ENCODE measurements at regions of chr17 and their contacts with region 1.

Region 1: GRCh38 chr17:40019140-40019991 is 4.1 kb downstream of the CSF3 start:
- DNase-seq: no peak
- ATAC-seq: peak in 1 of 4 donors; percentile 53
- H3K4me3 ChIP-seq: no peak overlapping the region
- H3K27ac ChIP-seq: peak overlapping the region in 5 of 12 donors; percentile 13 to 67 (median 33)
- H3K4me1 ChIP-seq: peaks cover 0 to 70% (median 30%) of the 10 kb centered on the region in 12 donors
- H3K27me3 ChIP-seq: no peaks in the 10 kb centered on the region
- CTCF ChIP-seq: no peak
- POLR2A ChIP-seq: no peak

Region 2: DNA sequence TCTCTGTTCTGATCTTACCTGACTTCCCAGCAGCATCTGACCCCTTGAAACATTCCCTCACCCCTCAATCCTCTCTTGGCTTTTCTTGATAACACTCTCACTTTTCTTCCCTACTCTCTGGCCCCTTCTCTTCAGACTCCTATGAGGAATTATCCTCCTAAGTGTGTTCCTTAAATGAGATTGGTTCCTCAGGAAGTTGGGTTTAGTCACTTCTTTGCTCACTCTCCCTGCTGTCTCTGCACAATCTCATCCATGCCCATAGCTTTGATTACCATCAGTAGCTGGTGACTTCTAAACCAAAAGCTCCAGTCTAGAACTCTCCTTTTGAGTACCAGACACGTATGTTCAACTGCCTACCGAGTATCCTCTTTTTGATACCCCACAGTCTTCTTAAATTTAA is 21.8 kb after region 1 on chr17:
- intact Hi-C with region 1: no loop called
- DNase-seq: no peak
- ATAC-seq: no peak
- H3K4me3 ChIP-seq: no peak overlapping the region
- H3K27ac ChIP-seq: no peak overlapping the region
- H3K4me1 ChIP-seq: peaks cover 0 to 18% (median 11%) of the 10 kb centered on the region in 12 donors
- H3K27me3 ChIP-seq: no peaks in the 10 kb centered on the region
- CTCF ChIP-seq: no peak
- POLR2A ChIP-seq: no peak

Region 3: GRCh38 chr17:40086150-40087044 is 67.0 kb after region 1 on chr17:
- intact Hi-C with region 1: loop called in 2 of 10 experiments (anchors 5 to 10 kb)
- DNase-seq: peak in 4 of 5 donors; percentile 59 to 82 (median 69)
- ATAC-seq: peak in 3 of 4 donors; percentile 7 to 38 (median 35)
- H3K4me3 ChIP-seq: no peak overlapping the region
- H3K27ac ChIP-seq: peak overlapping the region in 4 of 12 donors; percentile 4 to 66 (median 23)
- H3K4me1 ChIP-seq: peaks cover 0 to 31% (median 16%) of the 10 kb centered on the region in 12 donors
- H3K27me3 ChIP-seq: no peaks in the 10 kb centered on the region
- CTCF ChIP-seq: peak; percentile 75 to 91 (median 86)
- POLR2A ChIP-seq: no peak

Region 4: DNA sequence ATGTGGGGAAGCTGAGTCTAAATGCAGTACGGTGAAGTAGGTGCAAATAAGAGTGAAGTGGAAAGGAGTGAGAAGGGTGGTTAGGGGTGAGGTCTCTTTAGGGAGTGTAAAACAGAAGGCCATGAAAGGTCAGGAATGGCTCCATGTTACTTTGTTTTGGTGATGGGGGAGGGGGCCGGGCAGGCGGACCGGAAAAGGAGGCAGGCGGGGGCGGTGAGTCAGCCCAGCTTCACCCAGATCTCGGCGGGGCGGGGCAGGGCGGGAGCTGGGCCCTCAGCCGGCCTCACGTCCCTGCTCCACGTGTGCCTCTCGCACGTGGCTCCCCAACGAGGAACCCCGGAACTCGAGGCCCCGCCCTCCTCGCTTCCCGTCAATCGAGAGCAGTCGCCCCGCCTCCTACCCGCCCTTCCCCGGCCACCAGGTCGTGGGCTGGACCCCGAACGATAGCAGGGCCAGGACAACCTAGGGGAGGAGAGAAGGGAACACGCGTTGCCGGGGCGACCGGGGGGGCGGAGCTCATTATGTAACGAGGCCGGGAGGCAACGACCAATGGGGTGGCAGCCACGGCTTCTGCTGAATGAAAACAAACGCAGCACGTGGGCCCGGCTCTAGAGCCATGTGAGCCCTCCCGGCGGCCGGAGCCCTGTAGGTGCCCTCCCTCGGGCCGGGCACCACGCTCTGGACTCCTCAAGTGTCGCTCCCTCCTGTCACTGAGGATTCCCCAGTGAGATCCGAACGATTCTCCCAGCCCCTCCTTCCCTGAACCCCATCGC is 79.7 kb after region 1 on chr17:
- intact Hi-C with region 1: loop called in 1 of 10 experiments (anchors 10 kb)
- DNase-seq: peak; percentile 100
- ATAC-seq: peak; percentile 75 to 87 (median 82)
- H3K4me3 ChIP-seq: peak overlapping the region; percentile 72 to 100 (median 84)
- H3K27ac ChIP-seq: peak overlapping the region; percentile 93 to 100 (median 98)
- H3K4me1 ChIP-seq: peaks cover 20 to 93% (median 79%) of the 10 kb centered on the region in 12 donors
- H3K27me3 ChIP-seq: no peaks in the 10 kb centered on the region
- CTCF ChIP-seq: no peak
- POLR2A ChIP-seq: peak; percentile 64 to 89

Region 5: GRCh38 chr17:40168262-40168832 is 149.0 kb after region 1 on chr17:
- intact Hi-C with region 1: loop called in 7 of 10 experiments (anchors 1 to 10 kb)
- DNase-seq: peak in 1 of 5 donors; percentile 32
- ATAC-seq: peak; percentile 32 to 69 (median 59)
- H3K4me3 ChIP-seq: no peak overlapping the region
- H3K27ac ChIP-seq: peak overlapping the region in 7 of 12 donors; percentile 8 to 63 (median 23)
- H3K4me1 ChIP-seq: peaks cover 0 to 9% (median 4%) of the 10 kb centered on the region in 12 donors
- H3K27me3 ChIP-seq: no peaks in the 10 kb centered on the region
- CTCF ChIP-seq: peak; percentile 67 to 86 (median 80)
- POLR2A ChIP-seq: no peak

Region 6: GRCh38 chr17:40191237-40192208 is 172.2 kb after region 1 on chr17:
- intact Hi-C with region 1: loop called in 4 of 10 experiments (anchors 2 to 5 kb)
- DNase-seq: peak; percentile 71 to 86 (median 78)
- ATAC-seq: peak; percentile 59 to 87 (median 84)
- H3K4me3 ChIP-seq: peak overlapping the region in 11 of 12 donors; percentile 40 to 75 (median 62)
- H3K27ac ChIP-seq: peak overlapping the region in 7 of 12 donors; percentile 1 to 67 (median 46)
- H3K4me1 ChIP-seq: peaks cover 0 to 23% (median 8%) of the 10 kb centered on the region in 12 donors
- H3K27me3 ChIP-seq: no peaks in the 10 kb centered on the region
- CTCF ChIP-seq: peak; percentile 46 to 84 (median 69)
- POLR2A ChIP-seq: no peak